ENCODE measurements at regions of chr4 and their contacts with region 1.

Region 1: GRCh38 chr4:167021545-167022155 is 212.6 kb downstream of the SPOCK3 start:
- DNase-seq: peak; percentile 83
- H3K4me3 Mint-ChIP-seq: no peak overlapping the region
- H3K27ac Mint-ChIP-seq: no peak overlapping the region
- H3K4me1 Mint-ChIP-seq: no peaks in the 10 kb centered on the region
- H3K27me3 Mint-ChIP-seq: no peaks in the 10 kb centered on the region

Region 2: DNA sequence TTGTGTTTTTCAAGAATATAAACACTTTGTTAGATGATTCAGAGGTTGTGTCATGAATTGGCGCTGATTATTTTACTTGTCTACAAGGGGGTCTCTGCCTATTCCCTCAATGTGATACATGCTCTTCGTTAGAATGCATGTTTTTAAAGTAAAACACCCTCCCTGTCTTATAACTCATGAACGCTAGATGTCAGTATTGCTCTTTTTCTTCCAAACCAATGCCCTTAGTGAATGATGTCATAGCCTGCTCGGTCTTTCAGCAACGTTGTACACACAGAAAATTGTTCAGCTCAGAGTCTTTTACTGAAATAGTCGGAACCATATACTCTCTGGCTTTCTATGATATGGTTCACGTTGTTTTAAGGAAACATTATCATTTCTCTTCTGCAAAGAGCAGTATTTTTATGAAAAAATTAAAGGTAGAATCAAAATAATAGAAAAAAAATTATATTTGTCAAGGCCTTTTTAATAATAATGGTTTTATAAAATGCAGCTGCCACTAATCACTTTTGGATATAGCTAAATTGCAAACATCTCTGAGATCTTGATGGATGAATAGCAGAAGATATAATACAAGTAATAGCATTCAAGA is 855.7 kb before region 1 on chr4:
- intact Hi-C with region 1: loop called (anchors 5 kb)
- DNase-seq: peak; percentile 71
- H3K4me3 Mint-ChIP-seq: no peak overlapping the region
- H3K27ac Mint-ChIP-seq: no peak overlapping the region
- H3K4me1 Mint-ChIP-seq: no peaks in the 10 kb centered on the region
- H3K27me3 Mint-ChIP-seq: no peaks in the 10 kb centered on the region

Region 3: DNA sequence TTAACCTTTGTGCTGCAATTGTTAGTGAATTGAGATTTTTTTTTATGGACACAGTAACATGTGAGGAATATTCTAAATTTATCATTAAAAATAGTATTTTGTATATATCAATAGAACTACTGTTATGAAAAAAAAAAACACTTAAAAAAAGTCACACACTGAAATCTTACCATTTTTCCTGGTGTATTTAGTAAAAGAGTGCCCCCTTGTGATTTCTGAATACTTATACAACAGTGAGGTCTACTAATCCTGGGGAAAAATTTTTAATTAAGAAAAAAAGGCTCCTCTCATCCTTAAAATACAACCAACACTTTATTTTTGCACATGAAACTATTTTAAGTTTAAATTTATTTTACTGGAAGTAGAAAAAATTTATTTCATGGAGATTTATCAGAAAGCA is 269.0 kb after region 1 on chr4:
- intact Hi-C with region 1: loop called (anchors 5 kb)
- DNase-seq: no peak
- H3K4me3 Mint-ChIP-seq: no peak overlapping the region
- H3K27ac Mint-ChIP-seq: no peak overlapping the region
- H3K4me1 Mint-ChIP-seq: no peaks in the 10 kb centered on the region
- H3K27me3 Mint-ChIP-seq: no peaks in the 10 kb centered on the region

Region 4: GRCh38 chr4:167622481-167623246 is 601.0 kb after region 1 on chr4:
- intact Hi-C with region 1: loop called (anchors 5 kb)
- DNase-seq: peak; percentile 77
- H3K4me3 Mint-ChIP-seq: no peak overlapping the region
- H3K27ac Mint-ChIP-seq: no peak overlapping the region
- H3K4me1 Mint-ChIP-seq: no peaks in the 10 kb centered on the region
- H3K27me3 Mint-ChIP-seq: no peaks in the 10 kb centered on the region

Region 5: GRCh38 chr4:168076989-168077725 is 1055.5 kb after region 1 on chr4:
- intact Hi-C with region 1: loop called (anchors 2 kb)
- DNase-seq: peak; percentile 78
- H3K4me3 Mint-ChIP-seq: no peak overlapping the region
- H3K27ac Mint-ChIP-seq: no peak overlapping the region
- H3K4me1 Mint-ChIP-seq: no peaks in the 10 kb centered on the region
- H3K27me3 Mint-ChIP-seq: no peaks in the 10 kb centered on the region

Region 6: GRCh38 chr4:168153596-168154440 is 1132.2 kb after region 1 on chr4:
- intact Hi-C with region 1: loop called (anchors 1 kb)
- DNase-seq: peak; percentile 85
- H3K4me3 Mint-ChIP-seq: peak overlapping the region; percentile 5
- H3K27ac Mint-ChIP-seq: no peak overlapping the region
- H3K4me1 Mint-ChIP-seq: peaks cover 4% of the 10 kb centered on the region
- H3K27me3 Mint-ChIP-seq: peaks cover 10% of the 10 kb centered on the region

Measured in activated CD4-positive, alpha-beta T cell treated with anti-CD3 and anti-CD28 coated beads, Interleukin-2, amount 10 ng/mL, durations not matched to agents 24 days and 14 days (primary cell).